ENCODE measurements at regions of chr7 and their contacts with region 1.

Region 1: GRCh38 chr7:13336227-13336626 is 648.8 kb downstream of the ARL4A start:
- DNase-seq: no peak
- H3K4me3 ChIP-seq: no peak overlapping the region
- H3K27ac ChIP-seq: no peak overlapping the region
- H3K4me1 ChIP-seq: no peaks in the 10 kb centered on the region
- H3K27me3 ChIP-seq: no peaks in the 10 kb centered on the region
- CTCF ChIP-seq: no peak
- POLR2A ChIP-seq: no peak

Region 2: DNA sequence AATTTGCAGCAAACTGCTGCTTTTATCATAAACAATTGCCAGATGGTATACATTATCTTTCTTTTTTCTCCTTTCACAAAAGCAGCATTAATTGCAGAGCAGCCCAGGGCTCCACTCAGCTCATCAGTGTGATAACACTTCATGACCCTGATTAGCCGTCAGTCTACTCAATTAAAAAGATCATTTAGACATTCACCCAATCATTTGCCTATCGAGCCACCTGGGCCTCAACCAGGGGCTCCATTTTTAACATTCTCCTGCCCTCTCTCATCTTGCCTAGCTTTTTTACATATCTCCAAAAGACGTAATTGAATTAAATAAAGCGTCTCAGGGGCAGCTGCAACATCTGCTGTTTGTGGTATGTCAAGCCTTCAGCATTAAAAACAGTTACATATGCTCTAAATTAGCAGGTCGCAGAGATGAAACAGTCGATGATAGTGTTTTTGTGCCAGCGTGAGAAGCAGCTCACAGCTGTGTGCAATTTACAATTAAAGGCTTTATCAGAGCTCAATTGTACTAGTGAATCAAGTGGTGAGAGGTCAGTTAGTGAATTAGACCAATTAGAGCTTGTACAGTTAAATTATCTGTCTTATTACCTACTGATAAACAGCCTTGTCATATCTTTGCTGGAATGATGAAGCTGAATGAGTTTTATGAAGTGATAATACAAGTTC is 130.8 kb after region 1 on chr7:
- intact Hi-C with region 1: loop called (anchors 2 kb)
- DNase-seq: no peak
- H3K4me3 ChIP-seq: no peak overlapping the region
- H3K27ac ChIP-seq: no peak overlapping the region
- H3K4me1 ChIP-seq: no peaks in the 10 kb centered on the region
- H3K27me3 ChIP-seq: no peaks in the 10 kb centered on the region
- CTCF ChIP-seq: no peak
- POLR2A ChIP-seq: no peak